MCF 10A (cell line): ENCODE measurements at regions of chr9 and their contacts with region 1.

Region 1: DNA sequence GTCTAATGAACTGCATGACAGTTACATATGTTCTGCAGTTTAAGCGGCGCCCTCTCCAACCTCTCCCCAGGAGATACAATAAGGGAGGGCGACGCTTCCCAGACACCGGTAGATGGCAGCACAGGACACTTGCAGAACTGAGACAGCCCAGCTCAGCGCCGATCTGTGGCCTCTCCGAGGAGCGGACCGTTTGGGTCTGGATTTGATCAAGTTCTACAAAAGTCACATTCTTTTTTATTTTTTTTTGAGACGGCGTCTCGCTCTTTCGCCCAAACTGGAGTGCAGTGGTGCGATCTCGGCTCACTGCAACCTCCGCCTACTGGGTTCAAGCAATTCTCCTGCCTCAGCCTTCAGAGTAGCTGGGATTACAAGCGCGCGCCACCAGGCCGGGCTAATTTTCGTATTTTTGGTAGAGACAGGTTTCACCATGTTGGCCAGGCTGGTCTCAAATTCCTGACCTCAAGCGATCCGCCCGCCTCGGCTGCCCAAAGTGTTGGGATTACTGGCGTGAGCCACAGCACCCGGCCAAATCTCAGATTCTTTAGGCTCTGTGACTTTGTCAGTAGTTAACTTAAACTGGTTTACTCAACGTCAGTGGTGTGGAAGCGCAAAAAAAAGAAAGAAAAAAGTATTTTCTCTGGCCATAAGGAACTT is 1.4 kb upstream of the ATOSB start:
- DNase-seq: peak; percentile 94
- H3K4me3 Mint-ChIP-seq: peak overlapping the region; percentile 88
- H3K27ac Mint-ChIP-seq: no peak overlapping the region
- H3K4me1 Mint-ChIP-seq: peaks cover 31% of the 10 kb centered on the region
- H3K27me3 Mint-ChIP-seq: no peaks in the 10 kb centered on the region
- CTCF ChIP-seq: peak; percentile 95

Region 2: DNA sequence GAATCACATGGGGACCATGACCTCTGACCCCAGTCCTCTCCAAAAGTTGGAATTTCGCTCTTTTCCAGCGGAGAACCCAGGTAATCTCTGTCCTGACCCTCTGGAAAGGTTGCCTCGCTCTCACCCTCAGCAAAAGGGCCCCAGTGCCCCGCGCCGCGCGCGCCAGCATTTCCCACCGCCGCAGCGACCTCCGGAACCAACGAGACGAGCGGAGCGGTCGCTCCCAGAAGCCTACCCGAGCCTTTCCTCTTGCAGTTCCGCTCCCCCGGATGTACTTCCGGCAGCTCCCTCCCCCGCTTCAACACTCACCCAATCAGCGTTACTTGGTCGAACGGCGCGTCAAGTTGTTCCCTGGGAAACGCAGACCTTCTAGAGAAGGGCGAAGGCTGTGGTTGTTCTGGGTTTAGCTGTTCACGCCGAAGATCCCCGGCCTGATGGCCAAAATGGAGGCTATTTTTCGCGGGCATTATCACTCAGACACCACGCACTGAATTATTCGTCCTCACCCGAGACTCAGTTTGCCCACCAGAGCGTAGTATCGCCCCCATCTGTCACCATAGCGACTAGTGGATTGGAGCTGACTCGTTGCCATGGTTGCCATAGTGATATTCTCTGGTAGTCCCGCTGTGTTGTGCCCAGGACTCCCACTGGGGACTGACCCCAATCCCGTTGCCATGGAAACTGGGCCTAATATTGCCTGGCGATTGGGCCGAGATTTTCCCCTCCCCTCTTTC is 13.9 kb before region 1 on chr9 and contains the start of gene STOML2:
- CTCF ChIA-PET with region 1: interaction called, 23 read pairs
- POLR2A ChIA-PET with region 1: interaction called, 97 read pairs
- intact Hi-C with region 1: no loop called
- DNase-seq: peak; percentile 95
- H3K4me3 Mint-ChIP-seq: peak within 1 kb of the TSS; percentile 99
- H3K27ac Mint-ChIP-seq: peak within 1 kb of the TSS; percentile 99
- H3K4me1 Mint-ChIP-seq: peaks cover 19% of the 10 kb centered on the region
- H3K27me3 Mint-ChIP-seq: no peaks in the 10 kb centered on the region
- CTCF ChIP-seq: no peak
- total RNA-seq, gene STOML2: 203 and 209 TPM in 2 replicates

Region 3: GRCh38 chr9:35258676-35259474 is 141.8 kb after region 1 on chr9:
- CTCF ChIA-PET with region 1: interaction called, 24 read pairs
- POLR2A ChIA-PET with region 1: interaction called, 9 read pairs
- intact Hi-C with region 1: loop called (anchors 1 kb)
- DNase-seq: peak; percentile 81
- H3K4me3 Mint-ChIP-seq: no peak overlapping the region
- H3K27ac Mint-ChIP-seq: no peak overlapping the region
- H3K4me1 Mint-ChIP-seq: peaks cover 8% of the 10 kb centered on the region
- H3K27me3 Mint-ChIP-seq: no peaks in the 10 kb centered on the region
- CTCF ChIP-seq: peak; percentile 71

Region 4: GRCh38 chr9:35294066-35294465 is 177.0 kb after region 1 on chr9:
- CTCF ChIA-PET with region 1: no interaction called
- POLR2A ChIA-PET with region 1: no interaction called
- intact Hi-C with region 1: no loop called
- DNase-seq: no peak
- H3K4me3 Mint-ChIP-seq: no peak overlapping the region
- H3K27ac Mint-ChIP-seq: no peak overlapping the region
- H3K4me1 Mint-ChIP-seq: no peaks in the 10 kb centered on the region
- H3K27me3 Mint-ChIP-seq: no peaks in the 10 kb centered on the region
- CTCF ChIP-seq: no peak

Region 5: GRCh38 chr9:35470894-35471293 is 353.9 kb after region 1 on chr9:
- CTCF ChIA-PET with region 1: interaction called, 31 read pairs
- POLR2A ChIA-PET with region 1: interaction called, 22 read pairs
- intact Hi-C with region 1: no loop called
- DNase-seq: peak; percentile 91
- H3K4me3 Mint-ChIP-seq: peak overlapping the region; percentile 47
- H3K27ac Mint-ChIP-seq: peak overlapping the region; percentile 59
- H3K4me1 Mint-ChIP-seq: peaks cover 25% of the 10 kb centered on the region
- H3K27me3 Mint-ChIP-seq: no peaks in the 10 kb centered on the region
- CTCF ChIP-seq: no peak

Region 6: DNA sequence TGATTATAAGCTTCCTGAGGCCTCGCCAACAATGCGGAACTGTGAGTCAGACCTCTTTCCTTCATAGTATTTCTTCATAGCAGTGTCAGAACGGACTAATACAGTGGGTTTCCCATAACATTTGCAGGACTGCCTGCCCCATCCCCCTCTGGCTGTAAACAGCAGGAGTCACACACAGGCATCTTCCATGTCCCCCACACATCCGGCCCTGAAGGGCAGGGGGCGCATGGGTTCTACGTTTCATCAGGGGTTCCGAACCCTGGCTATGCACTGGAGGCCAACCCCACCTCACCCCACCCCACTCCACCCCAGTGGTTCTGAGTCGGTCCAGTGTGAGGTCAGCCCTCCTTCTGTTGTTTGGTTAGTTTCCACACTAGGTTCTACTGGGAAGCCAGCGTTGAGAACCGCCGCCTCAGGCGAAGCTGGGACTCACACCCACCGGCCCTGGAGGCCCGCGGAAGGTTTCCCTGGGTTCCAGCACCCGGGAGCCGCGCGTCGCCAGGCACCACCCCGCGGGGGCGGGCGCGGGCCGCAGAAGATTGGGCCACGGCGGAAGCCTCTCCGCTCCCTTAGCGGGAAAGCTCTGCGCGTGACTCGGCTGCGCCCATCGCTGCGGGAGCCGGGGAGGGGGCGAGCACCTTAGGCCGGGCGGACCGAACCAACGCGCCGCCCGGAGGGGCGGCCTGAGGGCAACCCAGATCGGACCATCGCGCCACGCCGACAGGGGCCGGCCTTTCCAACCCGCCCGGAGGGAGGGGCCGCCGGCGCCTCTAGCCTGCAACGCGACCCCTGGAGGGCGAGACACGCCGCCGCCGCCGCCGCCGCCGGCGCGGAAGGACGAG is 372.5 kb after region 1 on chr9 and contains the start of gene RUSC2:
- CTCF ChIA-PET with region 1: no interaction called
- POLR2A ChIA-PET with region 1: interaction called, 10 read pairs
- intact Hi-C with region 1: no loop called
- DNase-seq: peak; percentile 85
- H3K4me3 Mint-ChIP-seq: peak within 1 kb of the TSS; percentile 93
- H3K27ac Mint-ChIP-seq: peak within 1 kb of the TSS; percentile 97
- H3K4me1 Mint-ChIP-seq: peaks cover 23% of the 10 kb centered on the region
- H3K27me3 Mint-ChIP-seq: no peaks in the 10 kb centered on the region
- CTCF ChIP-seq: peak; percentile 20
- total RNA-seq, gene RUSC2: 27.8 and 30.5 TPM in 2 replicates

Region 7: DNA sequence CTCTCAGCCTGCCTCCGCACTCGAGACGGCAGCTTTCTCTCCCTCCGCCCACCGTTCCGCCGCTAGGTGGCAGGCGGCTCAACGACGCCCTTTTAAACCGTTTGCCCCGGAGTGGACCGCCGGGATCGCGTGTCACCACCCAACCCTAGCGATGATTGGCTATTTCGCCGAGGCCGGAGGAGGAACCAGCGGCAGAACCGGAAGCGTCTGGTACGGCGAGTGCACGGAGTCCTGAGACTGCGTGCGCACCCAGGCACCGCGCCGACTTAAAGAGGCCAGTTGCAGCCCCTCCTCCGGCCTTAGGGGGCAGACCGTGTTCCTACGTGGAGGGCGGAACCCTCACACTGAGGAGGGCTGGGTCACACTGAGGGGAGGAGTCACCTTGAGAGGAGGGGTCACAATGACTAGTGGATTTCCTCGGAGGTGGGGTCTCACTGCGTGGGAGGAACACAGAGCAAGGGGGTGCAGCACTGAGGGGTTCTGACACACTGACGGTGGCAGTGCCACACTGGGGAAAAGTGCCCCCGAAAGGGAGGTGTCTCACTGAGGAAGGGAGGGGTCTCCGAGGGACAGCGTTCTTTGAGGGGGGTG is 487.1 kb after region 1 on chr9:
- CTCF ChIA-PET with region 1: interaction called, 3 read pairs
- POLR2A ChIA-PET with region 1: interaction called, 7 read pairs
- intact Hi-C with region 1: loop called (anchors 10 kb)
- DNase-seq: peak; percentile 99
- H3K4me3 Mint-ChIP-seq: peak overlapping the region; percentile 97
- H3K27ac Mint-ChIP-seq: peak overlapping the region; percentile 99
- H3K4me1 Mint-ChIP-seq: peaks cover 28% of the 10 kb centered on the region
- H3K27me3 Mint-ChIP-seq: no peaks in the 10 kb centered on the region
- CTCF ChIP-seq: peak; percentile 69